Heart left ventricle (tissue), 16 donors: ENCODE measurements at regions of chr19 and their contacts with region 1.

Region 1: GRCh38 chr19:19776041-19777008 is 43.4 kb upstream of the ZNF14 start:
- DNase-seq: peak; percentile 97 to 99 (median 98)
- ATAC-seq: peak; percentile 100
- H3K4me3 ChIP-seq: peak overlapping the region; percentile 45 to 90 (median 81)
- H3K27ac ChIP-seq: peak overlapping the region in 11 of 12 donors; percentile 43 to 84 (median 70)
- H3K4me1 ChIP-seq: peaks cover 0 to 30% (median 15%) of the 10 kb centered on the region in 12 donors
- H3K27me3 ChIP-seq: no peaks in the 10 kb centered on the region
- CTCF ChIP-seq: peak in 2 of 12 donors; percentile 16 to 24
- POLR2A ChIP-seq: peak in 1 of 2 donors; percentile 64

Region 2: GRCh38 chr19:19663256-19664038 is 112.9 kb before region 1 on chr19 and contains the start of gene ATP13A1:
- intact Hi-C with region 1: loop called in 2 of 10 experiments (anchors 5 to 10 kb)
- DNase-seq: peak; percentile 97 to 99 (median 99)
- ATAC-seq: peak; percentile 97 to 98 (median 98)
- H3K4me3 ChIP-seq: peak within 1 kb of the TSS; percentile 78 to 100 (median 96)
- H3K27ac ChIP-seq: peak within 1 kb of the TSS; percentile 83 to 99 (median 95)
- H3K4me1 ChIP-seq: peaks cover 0 to 37% (median 21%) of the 10 kb centered on the region in 12 donors
- H3K27me3 ChIP-seq: no peaks in the 10 kb centered on the region
- CTCF ChIP-seq: peak in 3 of 12 donors; percentile 8 to 34 (median 31)
- POLR2A ChIP-seq: peak in 1 of 2 donors; percentile 63
- total RNA-seq, gene ATP13A1: 15.7 to 65.8 (median 23.1) TPM

Region 3: GRCh38 chr19:19670070-19670551 is 106.2 kb before region 1 on chr19:
- intact Hi-C with region 1: loop called in 2 of 10 experiments (anchors 2 to 10 kb)
- DNase-seq: no peak
- ATAC-seq: no peak
- H3K4me3 ChIP-seq: peak overlapping the region in 6 of 12 donors; percentile 81 to 100 (median 92)
- H3K27ac ChIP-seq: peak overlapping the region in 1 of 12 donors; percentile 94
- H3K4me1 ChIP-seq: peaks cover 0 to 22% (median 9%) of the 10 kb centered on the region in 12 donors
- H3K27me3 ChIP-seq: no peaks in the 10 kb centered on the region
- CTCF ChIP-seq: no peak
- POLR2A ChIP-seq: no peak

Region 4: DNA sequence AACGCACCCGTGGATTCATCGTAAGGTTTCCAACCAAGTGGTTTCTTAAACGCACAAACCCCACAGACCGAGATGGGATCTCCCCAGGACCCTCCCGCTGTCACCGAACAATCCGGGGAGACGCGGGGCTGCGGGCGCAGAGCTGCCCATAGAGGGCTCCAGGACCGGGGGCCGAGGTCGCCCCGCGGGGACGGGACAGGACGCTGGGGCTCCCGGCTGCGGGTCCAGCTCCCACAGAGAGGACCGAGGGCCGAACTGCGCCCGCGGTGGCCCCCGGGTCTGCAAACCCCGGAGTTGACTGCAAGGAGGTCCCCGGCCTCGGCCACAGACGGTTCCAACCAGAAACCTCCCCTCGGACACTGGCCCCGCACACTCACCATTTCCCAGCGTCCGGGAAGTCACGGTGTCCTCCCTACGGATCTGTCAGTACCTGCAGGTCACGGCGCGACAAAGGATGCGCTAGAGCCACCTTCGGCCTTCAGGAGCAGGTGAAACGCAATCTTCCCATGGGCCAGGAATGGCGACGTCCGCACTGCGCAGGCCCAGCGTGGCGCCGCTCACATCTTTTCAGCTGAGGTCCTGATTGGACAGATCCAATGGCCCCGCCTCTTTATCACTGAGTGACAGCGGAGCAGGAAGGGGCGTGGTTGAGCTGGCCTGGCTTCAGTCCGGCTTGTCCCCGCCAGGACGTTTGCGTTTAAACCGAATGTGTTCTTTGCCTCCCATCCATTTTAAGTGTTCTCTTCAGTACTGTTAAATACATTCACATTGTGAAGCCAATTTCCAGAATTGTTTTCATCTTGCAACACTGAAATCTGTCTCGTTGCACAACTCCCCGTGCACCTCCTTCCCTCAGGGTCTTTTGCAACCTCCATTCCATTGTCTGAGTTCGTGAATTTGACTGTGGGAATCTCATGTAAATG is 43.5 kb before region 1 on chr19 and contains the start of gene ZNF14:
- intact Hi-C with region 1: loop called in 2 of 10 experiments (anchors 2 to 5 kb)
- DNase-seq: peak; percentile 93 to 96 (median 95)
- ATAC-seq: peak; percentile 100
- H3K4me3 ChIP-seq: peak within 1 kb of the TSS; percentile 63 to 96 (median 84)
- H3K27ac ChIP-seq: peak within 1 kb of the TSS in 11 of 12 donors; percentile 58 to 83 (median 76)
- H3K4me1 ChIP-seq: peaks cover 0 to 13% (median 8%) of the 10 kb centered on the region in 12 donors
- H3K27me3 ChIP-seq: no peaks in the 10 kb centered on the region
- CTCF ChIP-seq: peak in 7 of 12 donors; percentile 5 to 40 (median 17)
- POLR2A ChIP-seq: peak in 1 of 2 donors; percentile 85
- total RNA-seq, gene ZNF14: 2.9 to 7.9 (median 3.6) TPM

Region 5: DNA sequence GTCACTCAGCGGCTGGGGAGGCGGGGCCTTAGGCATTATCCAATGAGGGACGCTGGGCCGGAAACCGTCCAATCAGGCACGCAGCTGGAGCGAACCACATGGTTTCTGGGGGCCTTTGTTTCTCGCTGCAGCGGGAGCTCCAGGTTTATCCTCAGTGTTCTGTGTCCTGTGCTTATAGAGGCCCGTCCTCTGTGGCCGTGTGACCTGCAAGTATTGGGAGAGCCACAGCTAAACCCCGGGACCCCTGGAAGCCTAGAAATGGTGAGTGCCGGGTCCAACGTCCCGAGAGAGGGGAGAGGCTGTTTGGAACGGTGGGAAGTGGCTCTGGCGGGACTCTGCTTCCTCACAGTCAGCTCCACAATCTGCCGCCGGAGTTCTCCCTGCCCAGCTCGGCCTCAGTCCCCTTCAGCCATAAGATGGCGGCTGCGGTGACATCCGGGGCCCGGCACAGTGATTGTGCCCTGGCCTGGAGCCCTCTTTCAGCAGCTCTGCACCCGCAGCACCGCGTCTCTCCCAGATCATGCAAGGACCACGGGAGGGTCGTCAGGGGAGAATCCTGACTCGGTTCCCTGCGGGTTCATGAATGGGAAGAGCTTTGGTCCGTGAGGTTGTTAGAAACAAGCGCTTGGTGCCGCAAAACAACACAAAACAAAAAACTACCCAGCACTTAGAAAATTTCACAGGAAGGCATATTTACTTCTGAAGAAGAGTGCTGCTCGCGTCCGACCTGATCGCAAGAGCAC is 89.6 kb after region 1 on chr19 and contains the start of gene ZNF253:
- intact Hi-C with region 1: loop called in 1 of 10 experiments (anchors 5 kb)
- DNase-seq: peak; percentile 97 to 99 (median 98)
- ATAC-seq: peak; percentile 99 to 100 (median 99)
- H3K4me3 ChIP-seq: peak within 1 kb of the TSS; percentile 53 to 93 (median 84)
- H3K27ac ChIP-seq: peak within 1 kb of the TSS; percentile 80 to 97 (median 94)
- H3K4me1 ChIP-seq: peaks cover 0 to 42% (median 25%) of the 10 kb centered on the region in 12 donors
- H3K27me3 ChIP-seq: peaks cover 0 to 3% (median 0%) of the 10 kb centered on the region in 9 donors
- CTCF ChIP-seq: no peak
- POLR2A ChIP-seq: peak; percentile 74 to 95
- total RNA-seq, gene ZNF253: 5.6 to 16.6 (median 8.1) TPM